Activated CD4-positive, alpha-beta memory T cell treated with anti-CD3 and anti-CD28 coated beads for 36 hours (primary cell): ENCODE measurements at regions of chr5 and their contacts with region 1.

Region 1: DNA sequence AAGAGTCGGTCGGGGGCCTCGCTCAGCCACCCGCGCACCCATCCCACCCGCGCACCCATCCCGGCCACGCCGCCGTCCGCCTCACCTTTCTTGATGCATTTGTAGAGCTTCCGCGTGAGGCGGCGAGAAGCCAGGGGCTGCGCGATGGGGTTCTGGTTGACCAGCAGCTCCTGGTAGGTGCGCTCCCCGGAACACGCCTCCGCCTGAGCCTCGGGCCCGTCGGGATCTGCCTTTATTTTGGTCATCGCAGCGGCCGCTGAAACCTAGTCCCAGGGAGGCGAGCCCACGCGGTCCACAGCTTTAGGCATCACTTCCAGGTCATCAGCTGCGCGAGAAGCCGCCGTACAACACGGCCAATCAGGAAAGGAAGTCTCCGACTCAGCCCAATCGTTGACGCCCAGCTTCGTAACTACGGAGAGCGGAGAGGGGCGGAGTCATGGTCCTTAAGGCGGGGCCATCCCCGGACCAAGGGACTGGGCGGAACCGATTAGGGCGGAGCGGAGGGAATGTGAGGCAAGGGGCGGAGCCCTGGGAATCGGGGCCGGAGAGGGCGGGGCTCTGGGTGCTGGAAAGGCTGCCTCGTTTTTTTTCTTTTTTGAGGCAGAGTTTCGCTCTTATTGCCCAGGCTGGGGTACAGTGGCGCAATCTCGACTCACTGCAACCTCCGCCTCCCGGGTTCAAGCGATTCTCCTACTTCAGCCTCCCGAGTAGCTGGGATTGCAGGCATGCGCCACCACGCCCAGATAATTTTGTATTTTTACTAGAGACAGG is at the start of gene NHP2:
- DNase-seq: peak; percentile 99
- H3K4me3 Mint-ChIP-seq: peak within 1 kb of the TSS; percentile 93
- H3K27ac Mint-ChIP-seq: peak within 1 kb of the TSS; percentile 88
- H3K4me1 Mint-ChIP-seq: peaks cover 48% of the 10 kb centered on the region
- H3K27me3 Mint-ChIP-seq: no peaks in the 10 kb centered on the region
- total RNA-seq, gene NHP2: 231 to 246 TPM

Region 2: DNA sequence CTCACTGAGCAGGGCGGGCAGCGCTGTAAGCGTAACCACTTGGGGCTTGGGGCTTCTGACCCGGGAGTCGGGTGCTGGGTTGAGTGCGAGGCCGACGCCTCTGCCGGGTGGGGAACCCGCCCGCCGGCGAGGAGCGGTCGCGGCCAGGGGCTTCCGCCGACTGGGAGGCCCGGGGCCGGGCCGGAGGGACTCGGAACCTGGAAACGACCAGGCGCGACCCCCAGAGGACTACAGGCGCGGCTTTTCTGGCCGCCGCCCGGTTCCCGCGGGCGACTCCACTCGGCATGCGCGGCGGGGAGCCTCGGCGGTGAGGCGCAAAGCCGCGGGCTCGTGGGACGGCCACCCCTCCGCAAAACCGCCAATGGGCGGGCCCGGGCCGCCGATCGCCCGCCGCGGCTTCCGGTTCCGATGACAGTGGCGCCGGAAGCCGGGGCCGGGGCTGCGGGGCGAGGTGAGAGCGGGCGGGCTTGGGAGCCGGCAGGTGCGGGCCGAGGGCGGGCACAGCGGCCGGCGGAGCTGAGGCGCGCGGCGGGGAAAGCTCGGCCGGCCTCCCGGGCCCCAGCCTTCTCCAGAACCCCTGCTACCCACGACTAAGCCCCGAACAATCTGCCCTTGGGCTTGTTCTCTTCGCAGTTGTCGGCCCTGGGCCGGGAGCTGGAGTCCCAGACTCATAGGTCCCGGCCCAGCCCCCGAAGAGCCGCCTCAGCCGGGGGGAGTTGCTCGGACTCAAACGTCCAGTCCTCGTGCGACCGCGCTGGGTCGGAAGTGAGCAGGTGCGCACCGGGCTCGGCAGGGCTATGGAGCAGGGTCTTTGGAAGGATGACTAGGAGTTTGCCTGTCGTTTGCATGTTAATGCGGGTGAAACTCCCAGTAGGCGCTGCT is 22.9 kb before region 1 on chr5 and contains the start of gene RMND5B:
- CTCF ChIA-PET with region 1: interaction called, 9 read pairs
- POLR2A ChIA-PET with region 1: interaction called, 12 read pairs
- intact Hi-C with region 1: loop called (anchors 2 kb)
- DNase-seq: peak; percentile 89
- H3K4me3 Mint-ChIP-seq: peak within 1 kb of the TSS; percentile 82
- H3K27ac Mint-ChIP-seq: peak within 1 kb of the TSS; percentile 81
- H3K4me1 Mint-ChIP-seq: peaks cover 21% of the 10 kb centered on the region
- H3K27me3 Mint-ChIP-seq: no peaks in the 10 kb centered on the region
- total RNA-seq, gene RMND5B: 32.0 to 34.9 TPM

Region 3: GRCh38 chr5:178176791-178177190 is 23.0 kb after region 1 on chr5:
- CTCF ChIA-PET with region 1: no interaction called
- POLR2A ChIA-PET with region 1: no interaction called
- intact Hi-C with region 1: no loop called
- DNase-seq: no peak
- H3K4me3 Mint-ChIP-seq: no peak overlapping the region
- H3K27ac Mint-ChIP-seq: no peak overlapping the region
- H3K4me1 Mint-ChIP-seq: no peaks in the 10 kb centered on the region
- H3K27me3 Mint-ChIP-seq: peaks cover 4% of the 10 kb centered on the region